SK-N-SH (cell line): ENCODE measurements at regions of chr3 and their contacts with region 1.

Region 1: DNA sequence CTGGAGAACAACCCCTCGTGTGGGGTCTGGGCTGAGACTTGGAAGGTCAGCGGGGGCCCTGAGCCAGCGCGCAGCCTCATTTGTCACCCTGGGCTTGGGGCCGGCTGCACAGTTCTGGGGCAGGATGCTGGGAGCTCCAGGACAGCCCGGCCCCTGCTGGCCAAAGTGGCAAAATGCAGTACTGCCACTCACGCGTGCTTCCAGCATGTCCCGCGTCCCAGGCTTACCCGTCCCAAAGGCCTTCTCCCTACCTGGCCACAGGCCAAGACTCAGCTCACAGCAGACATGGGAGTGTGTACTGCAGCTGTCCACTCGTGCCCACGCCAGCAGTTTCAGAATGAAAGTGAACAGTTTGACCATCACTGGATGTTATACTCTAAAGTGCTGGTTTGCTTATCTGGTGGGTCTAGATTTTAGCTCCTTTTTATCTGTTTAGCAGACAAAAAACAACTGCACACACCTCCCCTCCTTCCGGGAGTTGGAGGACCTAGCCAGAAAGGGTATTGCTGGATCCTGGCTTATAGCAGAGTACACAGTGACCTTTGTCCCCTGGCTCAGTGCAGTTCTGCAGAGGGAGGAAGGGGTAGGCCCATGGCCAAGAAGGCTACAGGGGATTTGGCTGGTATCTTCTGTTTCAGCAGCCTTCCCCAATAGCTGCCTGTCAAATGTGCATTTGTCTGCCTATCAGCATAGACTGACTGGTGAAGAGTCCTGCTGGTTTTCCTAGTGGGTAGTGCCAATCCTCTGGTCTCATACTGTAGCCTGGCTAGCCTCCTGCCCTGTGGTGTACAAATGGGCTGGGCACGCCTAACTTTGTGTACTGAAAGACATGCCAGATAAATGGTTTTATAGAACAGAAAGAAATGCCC is 23.2 kb upstream of the IP6K2 start:
- DNase-seq: peak; percentile 93
- H3K4me3 ChIP-seq: no peak overlapping the region
- H3K27ac ChIP-seq: peak overlapping the region in 1 of 2 experiments; percentile 48; a peak in 1 of 4 replicates
- H3K4me1 ChIP-seq: peaks cover 0 to 17% of the 10 kb centered on the region in 2 experiments; a peak in 1 of 4 replicates
- H3K27me3 ChIP-seq: no peaks in the 10 kb centered on the region
- CTCF ChIP-seq: peak; percentile 72
- EP300 ChIP-seq: no peak
- RAD21 ChIP-seq: peak; percentile 67

Region 2: GRCh38 chr3:48543271-48543866 is 196.8 kb before region 1 on chr3:
- CTCF ChIA-PET with region 1: no interaction called
- POLR2A ChIA-PET with region 1: no interaction called
- DNase-seq: peak; percentile 71
- H3K4me3 ChIP-seq: no peak overlapping the region
- H3K27ac ChIP-seq: peak overlapping the region in 1 of 2 experiments; percentile 45; a peak in 2 of 4 replicates
- H3K4me1 ChIP-seq: peaks cover 0 to 12% of the 10 kb centered on the region in 2 experiments; a peak in 1 of 4 replicates
- H3K27me3 ChIP-seq: no peaks in the 10 kb centered on the region
- CTCF ChIP-seq: no peak
- EP300 ChIP-seq: peak in 1 of 2 experiments; percentile 30; a peak in 1 of 4 replicates
- RAD21 ChIP-seq: no peak

Region 3: DNA sequence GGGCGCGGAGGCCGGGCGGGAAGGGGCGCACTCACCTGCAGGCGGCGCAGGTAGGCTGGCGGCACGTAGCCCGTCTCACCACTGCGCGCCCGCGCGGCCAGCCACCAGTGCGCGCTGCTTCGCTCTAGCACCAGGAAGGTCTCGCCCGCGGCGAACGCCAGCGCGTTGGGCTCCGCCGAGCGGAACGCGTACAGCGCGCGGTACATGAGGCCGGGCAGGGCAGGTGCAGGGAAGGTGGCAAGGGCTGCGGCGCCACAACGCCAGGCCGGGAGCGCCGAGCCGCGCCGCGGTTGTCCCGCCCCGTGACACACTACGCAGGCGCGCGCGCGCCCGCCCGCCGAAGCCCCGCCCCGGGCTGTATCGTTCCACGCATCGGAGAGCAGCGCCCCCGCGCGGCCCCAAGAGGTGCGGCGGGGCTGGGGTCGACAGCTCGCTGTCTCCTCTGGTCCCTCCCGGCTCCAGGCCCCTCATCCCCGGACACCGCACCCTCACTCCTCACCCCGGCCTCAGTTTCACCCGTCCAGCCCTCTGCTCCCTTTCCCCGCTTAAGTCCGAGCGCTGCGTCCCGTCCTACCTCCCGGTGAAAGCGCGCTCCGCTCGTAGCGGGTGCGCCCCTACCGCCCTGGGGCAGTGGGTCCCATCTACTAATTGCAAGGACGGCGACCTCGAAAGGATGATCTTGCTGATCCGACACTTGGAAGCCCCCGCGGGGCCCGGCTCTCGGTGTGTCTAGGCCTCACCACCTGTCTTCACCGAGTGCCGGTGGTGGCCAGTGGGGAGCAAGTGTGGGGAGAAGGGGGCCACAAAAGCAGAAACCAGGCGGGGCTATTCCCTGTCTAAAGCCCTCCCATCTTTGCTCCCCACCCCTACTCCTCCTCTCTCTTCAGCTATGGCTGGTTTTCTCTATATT is 54.3 kb before region 1 on chr3 and contains the start of gene NCKIPSD:
- CTCF ChIA-PET with region 1: interaction called, 17 read pairs
- POLR2A ChIA-PET with region 1: interaction called, 5 read pairs
- DNase-seq: peak; percentile 98
- H3K4me3 ChIP-seq: peak within 1 kb of the TSS; percentile 85 to 96
- H3K27ac ChIP-seq: peak within 1 kb of the TSS; percentile 22 to 85
- H3K4me1 ChIP-seq: peaks cover 20 to 47% of the 10 kb centered on the region in 2 experiments
- H3K27me3 ChIP-seq: no peaks in the 10 kb centered on the region
- CTCF ChIP-seq: peak; percentile 73
- EP300 ChIP-seq: no peak
- RAD21 ChIP-seq: peak; percentile 61
- polyA plus RNA-seq, gene NCKIPSD: 20.4 and 24.9 TPM in 2 replicates

Region 4: DNA sequence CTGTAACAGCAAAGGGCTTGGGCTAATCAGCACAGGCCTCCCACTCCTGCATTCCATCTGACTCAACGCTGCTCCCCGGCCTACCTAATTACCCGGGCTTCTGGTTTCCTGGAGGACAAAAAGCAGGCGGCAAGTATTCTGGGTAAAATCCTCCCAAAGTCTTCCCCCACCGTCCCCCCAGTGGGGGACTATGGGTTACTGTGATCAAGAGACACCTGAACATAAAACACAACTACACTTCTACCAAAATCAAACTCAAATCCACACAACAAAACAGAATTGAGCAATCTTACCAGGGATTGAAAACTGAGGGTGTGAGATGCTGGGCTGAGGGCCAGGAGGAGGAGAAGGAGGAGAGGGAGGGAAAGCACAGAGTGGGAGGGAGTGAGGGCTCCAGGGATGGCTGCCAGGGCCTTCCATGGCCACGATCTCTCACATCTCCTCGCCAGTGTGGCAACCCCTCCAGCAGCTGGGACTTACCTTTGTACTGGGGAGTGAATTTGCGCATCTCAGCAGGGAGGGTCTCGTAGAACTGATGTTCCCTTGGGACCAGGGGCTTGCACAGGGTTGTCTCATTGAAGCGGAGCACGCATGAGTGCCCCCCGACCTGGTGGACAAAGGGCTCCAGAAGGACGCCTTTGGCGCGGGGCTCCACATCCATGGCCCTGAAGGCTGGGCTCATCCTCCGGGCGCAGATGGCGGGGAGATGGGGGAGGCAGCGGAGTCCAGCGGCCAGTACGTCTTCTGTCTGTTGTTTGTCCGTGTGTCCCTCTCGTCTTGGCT is 45.4 kb before region 1 on chr3:
- CTCF ChIA-PET with region 1: interaction called, 10 read pairs
- POLR2A ChIA-PET with region 1: no interaction called
- DNase-seq: peak; percentile 41
- H3K4me3 ChIP-seq: no peak overlapping the region; a peak in 1 of 4 replicates
- H3K27ac ChIP-seq: peak overlapping the region; percentile 59 to 77
- H3K4me1 ChIP-seq: peaks cover 18 to 21% of the 10 kb centered on the region in 2 experiments; a peak in 3 of 4 replicates
- H3K27me3 ChIP-seq: no peaks in the 10 kb centered on the region
- CTCF ChIP-seq: no peak
- EP300 ChIP-seq: peak in 1 of 2 experiments; percentile 38; a peak in 1 of 4 replicates
- RAD21 ChIP-seq: no peak

Region 5: GRCh38 chr3:48708481-48708889 is 31.7 kb before region 1 on chr3:
- CTCF ChIA-PET with region 1: interaction called, 10 read pairs
- POLR2A ChIA-PET with region 1: no interaction called
- DNase-seq: no peak
- H3K4me3 ChIP-seq: no peak overlapping the region
- H3K27ac ChIP-seq: peak overlapping the region in 1 of 2 experiments; percentile 42; a peak in 2 of 4 replicates
- H3K4me1 ChIP-seq: peaks cover 0 to 3% of the 10 kb centered on the region in 2 experiments; a peak in 2 of 4 replicates
- H3K27me3 ChIP-seq: no peaks in the 10 kb centered on the region
- CTCF ChIP-seq: no peak
- EP300 ChIP-seq: no peak
- RAD21 ChIP-seq: no peak

Region 6: DNA sequence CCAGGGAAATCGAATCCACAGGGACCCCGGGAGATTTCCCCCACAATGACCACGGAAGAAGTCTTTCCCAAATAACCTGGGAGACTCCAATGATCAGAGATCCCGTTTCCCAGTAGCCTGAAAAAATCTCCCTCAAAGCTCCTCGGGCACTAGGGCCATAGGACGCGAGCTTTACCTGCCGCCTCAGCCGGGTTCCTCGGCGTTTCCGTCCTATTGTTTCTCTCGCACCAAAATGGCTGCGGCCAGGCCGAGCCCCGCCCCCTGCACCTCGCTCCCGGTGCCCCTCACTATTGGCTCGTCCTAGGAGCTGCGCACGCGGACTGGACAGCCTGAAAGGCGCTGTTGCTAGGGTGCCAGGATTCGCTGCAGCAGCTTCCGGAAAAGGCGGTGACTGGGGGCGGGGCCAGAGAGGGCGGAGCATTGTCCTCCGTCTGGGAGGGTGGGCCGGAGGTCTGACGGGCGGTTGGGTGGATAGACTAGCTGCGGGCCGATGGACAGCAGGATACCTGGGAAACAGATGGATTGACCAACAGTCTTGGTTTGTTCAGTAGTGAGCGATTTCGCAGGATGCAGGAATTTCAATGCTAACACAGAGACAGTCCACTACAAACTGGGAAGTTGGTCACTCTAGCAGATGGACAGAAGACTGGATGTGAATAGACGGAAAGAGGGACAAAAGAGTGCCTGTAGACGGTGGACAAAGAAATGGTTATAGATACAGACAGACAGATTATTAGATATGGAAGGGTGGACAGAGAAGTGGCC is 23.0 kb before region 1 on chr3 and contains the start of gene IP6K2:
- CTCF ChIA-PET with region 1: interaction called, 21 read pairs
- POLR2A ChIA-PET with region 1: interaction called, 7 read pairs
- DNase-seq: peak; percentile 94
- H3K4me3 ChIP-seq: peak within 1 kb of the TSS; percentile 84 to 90
- H3K27ac ChIP-seq: peak within 1 kb of the TSS; percentile 85 to 94
- H3K4me1 ChIP-seq: peaks cover 8 to 13% of the 10 kb centered on the region in 2 experiments; a peak in 3 of 4 replicates
- H3K27me3 ChIP-seq: no peaks in the 10 kb centered on the region
- CTCF ChIP-seq: no peak
- EP300 ChIP-seq: peak; percentile 40 to 93; a peak in 3 of 4 replicates
- RAD21 ChIP-seq: no peak
- polyA plus RNA-seq, gene IP6K2: 178 and 219 TPM in 2 replicates

Region 7: GRCh38 chr3:48727511-48727910 is 12.7 kb before region 1 on chr3:
- CTCF ChIA-PET with region 1: interaction called, 16 read pairs
- POLR2A ChIA-PET with region 1: no interaction called
- DNase-seq: no peak
- H3K4me3 ChIP-seq: no peak overlapping the region
- H3K27ac ChIP-seq: no peak overlapping the region
- H3K4me1 ChIP-seq: no peaks in the 10 kb centered on the region
- H3K27me3 ChIP-seq: no peaks in the 10 kb centered on the region
- CTCF ChIP-seq: no peak
- EP300 ChIP-seq: no peak
- RAD21 ChIP-seq: no peak

Region 8: GRCh38 chr3:48756640-48757039 is 16.5 kb after region 1 on chr3:
- CTCF ChIA-PET with region 1: interaction called, 11 read pairs
- POLR2A ChIA-PET with region 1: interaction called, 3 read pairs
- DNase-seq: no peak
- H3K4me3 ChIP-seq: no peak overlapping the region
- H3K27ac ChIP-seq: no peak overlapping the region
- H3K4me1 ChIP-seq: no peaks in the 10 kb centered on the region
- H3K27me3 ChIP-seq: no peaks in the 10 kb centered on the region
- CTCF ChIP-seq: no peak
- EP300 ChIP-seq: no peak
- RAD21 ChIP-seq: no peak

Region 9: DNA sequence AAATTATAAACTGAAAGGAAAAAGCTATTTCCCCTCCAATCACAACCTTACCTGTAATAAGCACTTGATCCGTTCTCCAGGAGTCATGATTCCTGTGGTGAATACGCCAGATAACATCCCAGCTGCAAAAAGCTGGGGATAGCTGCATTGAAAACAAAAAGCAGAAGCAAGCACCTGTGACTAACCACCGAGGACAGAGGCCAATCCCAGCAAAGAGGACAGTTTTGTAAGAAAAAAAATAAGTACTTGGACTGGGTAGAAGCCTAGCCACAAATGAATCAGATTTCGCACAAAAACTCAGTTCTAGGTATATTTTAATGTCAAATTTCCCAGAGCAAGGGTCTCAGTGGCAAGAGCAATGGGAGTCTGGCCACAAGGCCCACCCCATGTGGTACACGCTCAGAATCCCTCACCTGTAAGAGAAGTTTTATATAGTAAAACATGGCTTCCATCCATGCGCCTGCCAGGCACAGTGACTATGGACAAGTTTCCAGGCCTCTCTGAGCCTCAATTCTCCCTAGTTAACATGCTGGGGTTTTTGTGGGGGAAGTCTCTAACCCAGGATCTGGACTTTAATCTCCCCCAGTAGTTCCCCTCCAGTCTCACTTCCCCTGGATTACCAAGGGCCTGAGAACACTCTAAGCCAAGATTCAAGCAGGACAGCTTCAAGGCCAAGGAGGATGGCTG is 139.3 kb after region 1 on chr3:
- CTCF ChIA-PET with region 1: no interaction called
- POLR2A ChIA-PET with region 1: no interaction called
- DNase-seq: no peak
- H3K4me3 ChIP-seq: no peak overlapping the region
- H3K27ac ChIP-seq: no peak overlapping the region
- H3K4me1 ChIP-seq: no peaks in the 10 kb centered on the region
- H3K27me3 ChIP-seq: no peaks in the 10 kb centered on the region
- CTCF ChIP-seq: no peak
- EP300 ChIP-seq: no peak
- RAD21 ChIP-seq: no peak

Region 10: DNA sequence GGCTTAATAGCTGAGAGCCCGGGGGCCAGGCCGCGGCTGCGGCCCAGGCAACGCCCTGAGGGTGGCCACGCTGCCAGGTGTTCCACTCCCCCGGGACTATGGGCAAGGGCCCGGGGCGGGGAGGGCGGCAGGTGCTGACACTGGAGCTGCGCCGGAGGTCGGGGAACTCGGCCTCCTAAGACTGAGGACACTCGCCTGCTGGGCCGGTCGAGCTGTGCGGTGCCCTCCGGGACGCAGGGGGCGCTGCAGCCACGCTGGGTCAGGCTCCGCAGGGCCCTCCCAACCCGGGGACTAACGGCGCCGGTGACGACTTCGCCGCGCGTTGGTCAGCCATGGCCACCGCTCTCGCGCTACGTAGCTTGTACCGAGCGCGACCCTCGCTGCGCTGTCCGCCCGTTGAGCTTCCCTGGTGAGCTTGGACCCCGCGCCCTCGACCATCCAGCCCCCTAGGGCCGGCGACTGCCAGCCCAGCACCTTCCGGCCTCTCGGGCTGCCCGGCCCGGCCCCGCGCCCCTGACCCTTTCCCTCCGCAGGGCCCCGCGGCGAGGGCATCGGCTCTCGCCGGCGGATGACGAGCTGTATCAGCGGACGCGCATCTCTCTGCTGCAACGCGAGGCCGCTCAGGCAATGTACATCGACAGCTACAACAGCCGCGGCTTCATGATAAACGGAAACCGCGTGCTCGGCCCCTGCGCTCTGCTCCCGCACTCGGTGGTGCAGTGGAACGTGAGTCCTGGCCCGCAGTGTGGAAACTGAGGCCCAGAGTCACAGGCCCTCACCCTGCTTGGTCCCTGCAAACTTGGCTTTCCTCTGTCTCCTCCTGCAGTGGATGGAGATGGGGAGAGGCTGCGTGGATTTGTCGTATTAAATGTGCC is 281.9 kb after region 1 on chr3 and contains the start of gene NDUFAF3:
- CTCF ChIA-PET with region 1: no interaction called
- POLR2A ChIA-PET with region 1: no interaction called
- DNase-seq: peak; percentile 95
- H3K4me3 ChIP-seq: peak within 1 kb of the TSS; percentile 87 to 94
- H3K27ac ChIP-seq: peak within 1 kb of the TSS; percentile 99
- H3K4me1 ChIP-seq: peaks cover under 1 to 35% of the 10 kb centered on the region in 2 experiments; a peak in 1 of 4 replicates
- H3K27me3 ChIP-seq: no peaks in the 10 kb centered on the region
- CTCF ChIP-seq: peak; percentile 88
- EP300 ChIP-seq: peak in 1 of 2 experiments; percentile 33; a peak in 1 of 4 replicates
- RAD21 ChIP-seq: 0 out of 2 replicates have a peak, but pooled peaks have one; percentile 19
- polyA plus RNA-seq, gene NDUFAF3: 85.3 and 104 TPM in 2 replicates

Region 11: DNA sequence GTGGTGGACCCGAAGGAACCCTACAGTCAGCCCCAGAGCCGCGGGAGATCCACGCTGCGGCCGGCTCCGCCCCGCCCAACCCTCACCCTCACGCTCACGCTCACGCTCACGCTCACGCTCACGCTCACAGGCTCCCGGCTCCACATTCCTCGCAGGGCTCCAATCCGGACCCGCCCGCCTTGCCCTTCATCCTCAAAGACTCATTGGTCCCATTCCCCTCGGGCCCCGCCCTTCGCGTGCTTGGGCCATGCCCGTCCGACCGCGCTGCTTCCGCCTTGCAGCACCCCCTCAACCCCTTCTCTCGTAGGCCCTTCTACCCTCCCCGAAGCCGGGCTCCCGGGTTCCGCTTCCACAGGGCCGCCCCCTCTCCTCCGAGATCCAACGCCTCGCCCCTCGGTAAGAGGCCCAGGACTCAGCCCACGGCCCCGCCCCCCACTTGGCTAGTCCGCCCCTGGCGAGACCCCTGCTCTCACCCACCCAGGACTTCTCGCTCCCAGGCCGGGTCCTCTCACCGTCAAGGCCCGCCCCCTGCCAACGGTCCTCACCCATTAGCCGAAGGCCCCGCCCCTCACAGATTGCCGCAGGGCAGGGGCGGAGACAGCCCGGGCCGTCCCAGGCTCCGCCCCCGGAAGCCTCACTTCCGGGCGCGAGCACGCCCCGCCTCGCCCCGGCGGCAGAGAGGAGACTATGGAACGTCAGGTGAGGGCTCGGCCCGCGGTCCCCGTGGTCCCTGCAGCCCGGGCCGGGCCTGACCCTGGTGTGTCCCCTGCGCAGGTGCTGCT is 933.7 kb after region 1 on chr3 and contains the start of gene APEH:
- CTCF ChIA-PET with region 1: no interaction called
- POLR2A ChIA-PET with region 1: no interaction called
- DNase-seq: peak; percentile 99
- H3K4me3 ChIP-seq: peak within 1 kb of the TSS; percentile 83 to 90
- H3K27ac ChIP-seq: peak within 1 kb of the TSS; percentile 83 to 90
- H3K4me1 ChIP-seq: peaks cover 7 to 19% of the 10 kb centered on the region in 2 experiments; a peak in 1 of 4 replicates
- H3K27me3 ChIP-seq: no peaks in the 10 kb centered on the region
- CTCF ChIP-seq: no peak; the same call in 1 of the 2 replicates
- EP300 ChIP-seq: no peak
- RAD21 ChIP-seq: no peak
- polyA plus RNA-seq, gene APEH: 112 and 122 TPM in 2 replicates